SK-N-SH (cell line): ENCODE measurements at regions of chr3 and their contacts with region 1.

Region 1: GRCh38 chr3:115814778-115815380 is 191.6 kb downstream of the GAP43 start:
- DNase-seq: peak; percentile 68
- H3K4me3 ChIP-seq: no peak overlapping the region; a peak in 1 of 4 replicates
- H3K27ac ChIP-seq: no peak overlapping the region
- H3K4me1 ChIP-seq: no peaks in the 10 kb centered on the region
- H3K27me3 ChIP-seq: no peaks in the 10 kb centered on the region
- CTCF ChIP-seq: peak; percentile 95
- EP300 ChIP-seq: no peak
- RAD21 ChIP-seq: peak; percentile 91

Region 2: DNA sequence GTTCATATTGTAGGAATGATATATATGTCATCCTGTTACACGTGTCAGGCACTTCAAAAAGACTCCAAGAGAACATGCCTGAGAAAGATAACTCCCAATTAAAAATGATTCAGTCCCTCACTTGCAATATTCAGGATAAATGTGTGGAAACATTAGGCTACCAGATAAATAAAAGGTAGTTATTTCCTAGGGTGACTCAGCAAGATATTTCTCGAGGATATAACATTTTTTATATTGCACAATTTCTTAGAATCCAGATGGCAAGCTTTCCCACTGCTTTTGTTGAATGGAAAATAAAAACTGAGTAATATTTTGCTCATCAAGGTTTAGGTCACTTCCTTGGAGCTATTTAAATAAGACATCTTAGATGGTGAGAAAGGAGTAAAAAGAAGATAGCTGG is 10.2 kb before region 1 on chr3:
- CTCF ChIA-PET with region 1: interaction called, 12 read pairs
- POLR2A ChIA-PET with region 1: no interaction called
- DNase-seq: no peak
- H3K4me3 ChIP-seq: no peak overlapping the region
- H3K27ac ChIP-seq: peak overlapping the region in 1 of 2 experiments; percentile 92; a peak in 2 of 4 replicates
- H3K4me1 ChIP-seq: peaks cover 4 to 20% of the 10 kb centered on the region in 2 experiments
- H3K27me3 ChIP-seq: no peaks in the 10 kb centered on the region
- CTCF ChIP-seq: no peak
- EP300 ChIP-seq: peak in 1 of 2 experiments; percentile 43; a peak in 1 of 4 replicates
- RAD21 ChIP-seq: no peak